Activated naive CD4-positive, alpha-beta T cell treated with anti-CD3 and anti-CD28 coated beads for 36 hours (primary cell): ENCODE measurements at regions of chr2 and their contacts with region 1.

Region 1: GRCh38 chr2:64036034-64036705 is 16.9 kb upstream of the VPS54 start:
- DNase-seq: peak; percentile 37
- H3K4me3 Mint-ChIP-seq: peak overlapping the region; percentile 25
- H3K27ac Mint-ChIP-seq: peak overlapping the region; percentile 70
- H3K4me1 Mint-ChIP-seq: peaks cover 50% of the 10 kb centered on the region
- H3K27me3 Mint-ChIP-seq: no peaks in the 10 kb centered on the region

Region 2: DNA sequence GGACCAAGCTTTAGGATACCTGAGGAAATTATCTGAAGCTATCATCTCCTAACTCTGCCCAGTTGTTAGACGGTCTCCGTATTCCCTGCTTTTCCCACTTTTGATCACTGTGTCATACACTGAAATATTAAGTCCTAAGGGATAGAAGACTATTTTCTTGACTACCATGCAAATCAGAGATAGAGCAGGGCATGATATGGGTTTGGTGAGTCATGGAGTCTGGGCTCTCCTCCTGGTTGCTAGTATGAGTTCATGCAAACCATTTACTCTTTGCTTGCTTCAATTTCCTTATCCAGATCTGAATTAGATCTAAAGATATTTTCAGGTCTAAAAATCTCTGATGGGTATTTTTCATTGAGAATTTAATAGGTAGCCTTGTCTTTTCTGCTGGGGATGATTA is 1275.6 kb before region 1 on chr2:
- CTCF ChIA-PET with region 1: no interaction called
- intact Hi-C with region 1: no loop called
- DNase-seq: no peak
- H3K4me3 Mint-ChIP-seq: no peak overlapping the region
- H3K27ac Mint-ChIP-seq: no peak overlapping the region
- H3K4me1 Mint-ChIP-seq: no peaks in the 10 kb centered on the region
- H3K27me3 Mint-ChIP-seq: no peaks in the 10 kb centered on the region

Region 3: GRCh38 chr2:63571291-63571690 is 464.9 kb before region 1 on chr2:
- CTCF ChIA-PET with region 1: no interaction called
- intact Hi-C with region 1: no loop called
- DNase-seq: no peak
- H3K4me3 Mint-ChIP-seq: no peak overlapping the region
- H3K27ac Mint-ChIP-seq: no peak overlapping the region
- H3K4me1 Mint-ChIP-seq: no peaks in the 10 kb centered on the region
- H3K27me3 Mint-ChIP-seq: no peaks in the 10 kb centered on the region

Region 4: DNA sequence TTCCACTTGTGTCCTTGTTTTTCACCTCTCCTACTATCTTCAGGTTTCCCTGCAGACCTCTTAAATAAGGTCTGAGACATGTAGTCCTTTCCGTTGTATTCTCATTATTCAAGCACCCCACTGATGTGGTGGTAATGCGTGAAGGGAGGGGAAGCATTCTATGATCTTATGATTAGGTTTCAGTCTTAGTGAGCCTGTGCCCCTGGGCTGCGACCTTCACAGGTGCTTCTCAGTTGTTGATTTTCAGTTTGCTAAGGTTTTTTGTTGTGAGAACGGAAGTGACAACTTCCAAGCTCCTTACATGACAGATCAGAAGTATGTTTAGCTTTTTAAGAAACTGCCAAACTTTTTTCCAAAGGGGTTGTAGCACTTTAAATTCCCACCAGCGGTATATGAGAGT is 58.3 kb before region 1 on chr2:
- CTCF ChIA-PET with region 1: no interaction called
- intact Hi-C with region 1: loop called (anchors 1 kb)
- DNase-seq: peak; percentile 66
- H3K4me3 Mint-ChIP-seq: no peak overlapping the region
- H3K27ac Mint-ChIP-seq: peak overlapping the region; percentile 5
- H3K4me1 Mint-ChIP-seq: peaks cover 23% of the 10 kb centered on the region
- H3K27me3 Mint-ChIP-seq: no peaks in the 10 kb centered on the region

Region 5: DNA sequence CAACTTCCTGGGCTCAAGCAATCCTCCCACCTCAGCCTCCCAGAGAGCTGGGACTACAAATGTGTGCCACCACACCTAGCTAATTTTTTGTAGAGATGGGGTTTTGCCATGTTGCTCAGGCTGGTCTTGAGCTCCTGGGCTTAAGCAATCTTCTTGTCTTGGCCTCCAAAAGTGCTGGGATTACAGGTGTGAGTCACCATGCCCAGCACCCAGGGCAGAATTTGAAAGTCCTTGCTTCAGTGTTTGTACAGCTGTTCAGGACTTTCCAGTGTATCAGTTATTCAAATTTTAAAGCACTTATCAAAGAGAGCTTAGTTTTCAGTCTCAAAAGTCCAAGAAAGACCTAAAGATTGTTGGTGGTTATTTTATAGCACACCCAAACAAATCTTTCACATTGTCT is 26.7 kb after region 1 on chr2:
- CTCF ChIA-PET with region 1: no interaction called
- intact Hi-C with region 1: loop called (anchors 1 kb)
- DNase-seq: peak; percentile 36
- H3K4me3 Mint-ChIP-seq: no peak overlapping the region
- H3K27ac Mint-ChIP-seq: peak overlapping the region; percentile 23
- H3K4me1 Mint-ChIP-seq: peaks cover 36% of the 10 kb centered on the region
- H3K27me3 Mint-ChIP-seq: no peaks in the 10 kb centered on the region

Region 6: GRCh38 chr2:64114063-64114911 is 78.1 kb after region 1 on chr2:
- CTCF ChIA-PET with region 1: no interaction called
- intact Hi-C with region 1: loop called (anchors 1 kb)
- DNase-seq: no peak
- H3K4me3 Mint-ChIP-seq: no peak overlapping the region
- H3K27ac Mint-ChIP-seq: peak overlapping the region; percentile 1
- H3K4me1 Mint-ChIP-seq: peaks cover 80% of the 10 kb centered on the region
- H3K27me3 Mint-ChIP-seq: no peaks in the 10 kb centered on the region

Region 7: GRCh38 chr2:64144057-64145013 is 108.2 kb after region 1 on chr2 and contains the start of gene PELI1:
- CTCF ChIA-PET with region 1: no interaction called
- intact Hi-C with region 1: loop called (anchors 1 kb)
- DNase-seq: peak; percentile 98
- H3K4me3 Mint-ChIP-seq: peak within 1 kb of the TSS; percentile 94
- H3K27ac Mint-ChIP-seq: peak within 1 kb of the TSS; percentile 94
- H3K4me1 Mint-ChIP-seq: peaks cover 31% of the 10 kb centered on the region
- H3K27me3 Mint-ChIP-seq: no peaks in the 10 kb centered on the region
- total RNA-seq, gene PELI1: 25.7 to 28.0 TPM

Region 8: DNA sequence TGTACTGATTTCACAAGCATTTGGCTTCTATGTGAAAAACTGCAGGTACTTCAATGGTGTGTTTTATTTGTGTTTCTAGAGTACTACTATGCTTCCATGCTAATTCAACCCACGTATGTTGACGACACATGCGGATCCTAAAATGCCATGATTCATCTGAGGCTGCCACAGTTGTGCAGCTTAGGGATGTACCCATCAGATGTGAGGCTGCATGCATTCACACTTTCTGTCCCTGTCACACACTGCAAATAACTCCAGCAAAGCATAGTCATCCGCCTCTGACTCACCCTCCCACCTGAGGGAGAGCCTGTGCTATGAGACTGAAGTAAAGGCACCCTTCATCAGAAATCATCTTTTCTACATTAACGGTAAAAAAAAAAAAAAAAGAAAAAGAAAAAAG is 639.7 kb after region 1 on chr2:
- CTCF ChIA-PET with region 1: no interaction called
- intact Hi-C with region 1: loop called (anchors 1 kb)
- DNase-seq: peak; percentile 92
- H3K4me3 Mint-ChIP-seq: no peak overlapping the region
- H3K27ac Mint-ChIP-seq: no peak overlapping the region
- H3K4me1 Mint-ChIP-seq: peaks cover 42% of the 10 kb centered on the region
- H3K27me3 Mint-ChIP-seq: no peaks in the 10 kb centered on the region

Region 9: DNA sequence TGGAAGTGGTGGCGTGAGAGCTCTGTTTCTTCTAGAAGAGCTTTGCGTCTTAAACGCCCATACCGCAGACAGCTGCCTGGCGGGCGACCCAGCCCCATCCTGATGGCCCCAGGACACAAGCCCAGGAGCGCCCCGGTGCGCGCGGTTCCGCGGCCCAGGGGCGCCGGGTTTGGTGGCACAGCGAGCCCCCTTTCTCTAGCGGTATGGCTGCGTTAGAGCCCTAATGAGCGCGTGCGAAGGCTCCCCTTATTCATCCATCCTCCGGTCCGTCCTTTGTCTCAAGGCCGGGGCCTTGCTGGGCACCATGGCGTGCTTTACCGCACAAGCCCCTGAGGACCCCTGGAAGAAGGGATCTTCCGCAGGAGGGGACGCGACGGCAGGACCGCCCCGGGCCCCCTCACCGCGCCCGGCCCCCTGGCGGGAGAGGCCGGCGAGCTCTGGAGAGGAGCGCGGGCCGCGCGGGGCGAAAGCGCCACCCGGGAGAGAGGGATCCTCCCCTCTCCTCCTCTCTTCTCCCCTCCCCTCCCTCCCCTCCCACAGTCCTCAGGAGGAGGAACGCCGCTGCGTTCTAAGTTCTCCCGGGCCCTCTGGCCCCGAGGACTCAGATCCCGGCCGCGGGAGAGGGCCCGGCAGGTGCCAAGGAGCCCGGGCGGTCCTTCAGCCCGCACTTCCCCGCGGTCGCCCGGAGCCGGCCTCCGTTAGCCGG is 952.4 kb after region 1 on chr2:
- CTCF ChIA-PET with region 1: no interaction called
- intact Hi-C with region 1: loop called (anchors 10 kb)
- DNase-seq: peak; percentile 35
- H3K4me3 Mint-ChIP-seq: peak overlapping the region; percentile 60
- H3K27ac Mint-ChIP-seq: peak overlapping the region; percentile 7
- H3K4me1 Mint-ChIP-seq: peaks cover 35% of the 10 kb centered on the region
- H3K27me3 Mint-ChIP-seq: peaks cover 11% of the 10 kb centered on the region